ENCODE measurements at regions of chr15 and their contacts with region 1.

Region 1: DNA sequence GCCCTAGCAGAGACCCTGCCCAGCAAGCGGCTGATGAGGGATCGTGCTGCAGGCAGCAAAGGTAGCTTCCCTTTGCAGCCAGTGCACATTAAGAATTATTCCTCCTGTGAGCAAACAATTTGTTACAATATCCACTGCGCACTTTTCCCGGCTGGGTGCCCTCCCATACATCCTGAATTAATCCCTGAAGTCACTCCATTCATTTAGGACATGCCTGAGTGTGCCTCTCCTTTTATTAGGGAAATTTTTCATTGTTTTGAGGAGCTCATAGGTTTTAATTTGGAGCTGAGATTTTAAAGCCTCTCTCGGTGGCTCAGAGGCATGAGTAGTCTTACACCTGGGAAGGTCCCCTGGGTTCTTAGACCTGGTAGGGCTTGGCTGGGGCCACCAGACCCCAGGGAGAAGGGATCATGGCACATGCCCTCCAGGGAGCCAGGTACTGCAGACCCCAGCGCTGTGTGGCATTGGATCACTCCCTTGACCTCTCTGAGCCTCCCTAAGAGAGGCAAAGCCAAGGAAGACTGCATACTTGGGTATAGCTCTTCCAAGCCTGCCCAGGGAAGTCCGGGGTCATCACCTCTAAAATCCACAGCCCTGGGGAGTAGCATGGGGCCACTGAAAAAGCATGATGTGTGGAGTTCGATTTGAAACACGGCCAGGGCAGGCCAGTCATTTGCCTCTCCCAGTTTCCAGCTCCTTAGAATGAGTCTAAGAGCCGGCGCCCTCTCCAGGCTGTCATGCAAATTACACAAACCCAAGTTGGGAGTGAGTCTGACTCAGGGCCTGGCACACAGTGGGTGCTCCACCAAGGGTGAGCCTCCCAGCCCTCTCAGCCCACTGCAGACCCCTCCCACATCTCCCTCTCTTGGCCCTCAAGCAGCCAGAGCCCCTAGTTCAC is 151.9 kb upstream of the LINGO1 start:
- DNase-seq: peak; percentile 79
- ATAC-seq: peak; percentile 79
- H3K4me3 Mint-ChIP-seq: no peak overlapping the region
- H3K27ac Mint-ChIP-seq: no peak overlapping the region
- H3K4me1 Mint-ChIP-seq: peaks cover 20% of the 10 kb centered on the region
- H3K27me3 Mint-ChIP-seq: no peaks in the 10 kb centered on the region
- CTCF ChIP-seq: peak; percentile 58

Region 2: DNA sequence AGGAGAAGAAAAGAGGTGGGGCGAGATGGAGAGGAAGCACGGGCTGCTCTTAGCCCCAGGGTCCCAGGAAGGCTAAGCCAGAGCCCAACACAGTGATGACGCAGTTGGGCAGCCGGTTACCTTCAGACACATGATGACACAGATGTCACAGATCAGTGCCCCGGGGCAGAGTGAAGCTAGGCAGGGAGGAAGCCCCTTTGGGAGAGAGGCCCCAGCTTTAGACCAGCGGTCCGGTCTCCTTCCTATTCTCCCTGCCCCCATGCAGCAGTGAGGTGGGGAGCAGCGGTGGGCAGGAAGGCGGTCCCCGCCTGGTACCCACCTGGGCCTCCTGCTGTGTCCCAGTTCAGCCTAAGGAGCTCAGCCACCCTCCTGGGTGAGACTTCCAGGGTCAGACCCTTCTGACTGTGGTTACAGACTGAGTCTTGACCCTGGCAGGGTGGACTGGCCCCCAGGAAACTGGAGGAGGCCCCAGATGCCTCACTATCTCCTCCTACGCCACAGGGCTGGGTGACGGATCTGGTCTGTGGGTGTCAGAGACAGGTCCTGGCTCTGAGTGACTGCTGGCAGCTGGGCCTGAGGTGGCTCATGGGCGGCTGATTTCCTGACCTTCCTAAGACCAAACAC is 113.2 kb before region 1 on chr15:
- CTCF ChIA-PET with region 1: interaction called, 11 read pairs
- POLR2A ChIA-PET with region 1: interaction called, 3 read pairs
- DNase-seq: no peak
- ATAC-seq: no peak
- H3K4me3 Mint-ChIP-seq: no peak overlapping the region
- H3K27ac Mint-ChIP-seq: no peak overlapping the region
- H3K4me1 Mint-ChIP-seq: no peaks in the 10 kb centered on the region
- H3K27me3 Mint-ChIP-seq: no peaks in the 10 kb centered on the region
- CTCF ChIP-seq: no peak

Region 3: DNA sequence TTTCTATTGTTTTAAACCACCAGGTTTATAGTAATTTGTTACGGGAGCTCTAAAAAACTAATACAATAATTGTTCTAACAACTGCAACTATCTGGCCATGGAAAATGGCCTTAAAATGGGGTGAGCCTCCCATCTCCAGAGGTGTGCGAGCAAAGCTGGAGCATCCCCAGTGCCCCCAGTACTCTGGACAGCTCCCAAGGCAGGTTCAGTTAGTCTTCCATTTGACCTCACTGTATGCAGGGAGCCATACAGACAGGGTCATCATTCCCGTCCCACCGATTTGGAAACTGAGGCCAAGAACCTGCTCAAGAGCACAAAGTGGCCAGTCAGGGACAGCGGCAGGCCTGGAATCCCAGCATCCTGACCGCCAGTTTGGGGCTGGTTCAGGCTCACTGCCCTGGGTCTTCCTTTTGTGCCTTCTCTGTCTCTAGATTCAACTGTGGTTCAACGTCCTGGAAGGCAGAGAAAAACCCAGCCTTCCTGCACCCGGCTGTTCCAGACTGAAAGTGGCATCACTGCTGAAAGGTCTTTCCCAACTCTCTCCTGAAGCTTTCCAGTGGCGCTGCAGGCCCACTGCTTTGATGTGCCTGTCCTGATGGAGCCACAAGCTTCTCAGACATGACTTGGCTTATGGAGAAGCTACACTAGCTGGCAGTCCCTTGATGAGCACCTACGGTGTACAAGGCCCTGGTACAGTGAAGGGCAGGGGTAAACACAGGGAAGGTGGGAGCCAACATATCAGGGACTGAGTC is 75.3 kb before region 1 on chr15:
- CTCF ChIA-PET with region 1: interaction called, 10 read pairs
- POLR2A ChIA-PET with region 1: no interaction called
- DNase-seq: no peak
- ATAC-seq: no peak
- H3K4me3 Mint-ChIP-seq: no peak overlapping the region
- H3K27ac Mint-ChIP-seq: no peak overlapping the region
- H3K4me1 Mint-ChIP-seq: peaks cover 8% of the 10 kb centered on the region
- H3K27me3 Mint-ChIP-seq: no peaks in the 10 kb centered on the region; the same call in 1 of the 2 replicates
- CTCF ChIP-seq: no peak

Region 4: DNA sequence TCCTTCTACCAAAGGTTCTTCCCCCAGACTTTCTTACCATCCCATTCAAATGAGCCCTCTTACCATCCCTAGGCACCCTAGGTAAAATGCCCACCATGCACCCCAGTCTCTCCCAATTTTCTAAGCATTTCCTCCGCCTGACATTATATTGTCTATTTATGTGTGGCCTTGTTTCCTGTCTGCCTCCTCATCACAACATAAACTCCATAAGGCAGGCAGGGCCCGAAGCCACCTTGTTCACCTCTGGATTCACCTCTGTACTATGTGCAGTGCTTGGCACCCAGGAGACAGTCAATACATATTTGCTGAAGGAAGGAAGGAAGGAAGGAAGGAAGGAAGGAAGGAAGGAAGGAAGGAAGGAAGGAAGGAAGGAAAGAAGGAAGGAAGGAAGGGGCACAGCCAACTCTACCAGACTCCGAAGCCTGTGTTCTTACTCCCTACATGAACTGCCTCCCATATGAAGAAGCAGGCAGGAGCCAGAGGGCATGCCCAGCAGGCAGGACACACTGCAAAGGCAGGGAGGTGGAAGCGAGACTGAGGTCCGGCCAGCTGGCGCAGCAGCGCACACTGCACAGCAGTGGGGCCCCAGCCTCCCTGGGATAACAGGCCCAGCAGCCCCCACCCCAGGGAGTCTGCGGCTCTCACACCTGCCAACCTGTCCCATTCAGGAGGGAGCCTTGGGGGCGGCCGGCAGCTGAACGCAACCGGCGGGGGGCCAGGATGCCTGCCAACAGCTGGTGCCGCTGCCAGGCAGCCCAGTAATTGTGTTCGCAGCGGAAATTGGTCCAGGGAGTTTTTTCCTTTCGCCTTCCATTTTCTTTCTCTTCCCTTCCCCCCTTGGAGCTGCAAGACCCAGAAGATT is 46.0 kb before region 1 on chr15:
- CTCF ChIA-PET with region 1: interaction called, 16 read pairs
- POLR2A ChIA-PET with region 1: no interaction called
- DNase-seq: peak; percentile 40
- ATAC-seq: peak; percentile 10
- H3K4me3 Mint-ChIP-seq: peak overlapping the region; percentile 52
- H3K27ac Mint-ChIP-seq: no peak overlapping the region
- H3K4me1 Mint-ChIP-seq: peaks cover 46% of the 10 kb centered on the region
- H3K27me3 Mint-ChIP-seq: no peaks in the 10 kb centered on the region; the same call in 1 of the 2 replicates
- CTCF ChIP-seq: no peak

Region 5: GRCh38 chr15:77768107-77768506 is 16.5 kb before region 1 on chr15:
- CTCF ChIA-PET with region 1: interaction called, 25 read pairs
- POLR2A ChIA-PET with region 1: no interaction called
- DNase-seq: peak; percentile 38
- ATAC-seq: peak; percentile 85
- H3K4me3 Mint-ChIP-seq: no peak overlapping the region
- H3K27ac Mint-ChIP-seq: peak overlapping the region; percentile 39; the same call in 1 of the 2 replicates
- H3K4me1 Mint-ChIP-seq: peaks cover 27% of the 10 kb centered on the region
- H3K27me3 Mint-ChIP-seq: no peaks in the 10 kb centered on the region
- CTCF ChIP-seq: no peak

Region 6: DNA sequence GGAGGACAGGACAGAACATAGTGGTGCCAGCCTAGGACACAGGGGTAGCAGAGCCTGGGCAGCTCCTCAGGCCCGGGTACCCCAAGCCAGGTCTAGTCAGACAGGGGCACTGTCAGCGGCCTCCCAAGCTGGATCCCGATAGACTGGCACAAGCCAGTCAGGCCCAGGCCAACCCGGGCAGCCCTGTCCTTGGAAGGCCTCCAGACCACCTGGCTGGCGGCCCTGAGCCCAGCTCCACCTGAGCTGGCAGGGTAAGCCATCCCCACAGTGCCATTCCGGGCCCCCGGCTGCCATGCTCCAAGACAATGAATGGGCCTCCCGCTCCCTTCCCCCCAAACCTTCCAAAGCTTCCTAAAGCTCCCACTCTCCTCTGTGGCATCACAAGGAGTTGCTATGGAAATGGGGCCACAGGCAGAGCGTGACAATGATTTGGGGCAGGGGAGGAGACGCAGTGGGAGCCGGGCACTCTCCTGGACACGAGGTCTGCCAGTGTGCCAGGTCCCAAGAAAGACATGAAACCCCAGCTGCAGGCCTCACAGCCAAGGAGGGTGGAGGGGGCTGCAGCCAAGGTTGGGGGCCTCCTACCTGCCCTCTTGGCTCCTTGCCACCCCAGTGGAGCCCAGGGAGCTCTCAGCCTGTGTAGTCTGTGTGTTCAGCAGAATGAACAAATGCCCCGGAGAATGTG is 13.6 kb after region 1 on chr15:
- CTCF ChIA-PET with region 1: interaction called, 15 read pairs
- POLR2A ChIA-PET with region 1: no interaction called
- DNase-seq: no peak
- ATAC-seq: no peak
- H3K4me3 Mint-ChIP-seq: no peak overlapping the region
- H3K27ac Mint-ChIP-seq: no peak overlapping the region
- H3K4me1 Mint-ChIP-seq: peaks cover 14% of the 10 kb centered on the region
- H3K27me3 Mint-ChIP-seq: no peaks in the 10 kb centered on the region
- CTCF ChIP-seq: no peak

Region 7: DNA sequence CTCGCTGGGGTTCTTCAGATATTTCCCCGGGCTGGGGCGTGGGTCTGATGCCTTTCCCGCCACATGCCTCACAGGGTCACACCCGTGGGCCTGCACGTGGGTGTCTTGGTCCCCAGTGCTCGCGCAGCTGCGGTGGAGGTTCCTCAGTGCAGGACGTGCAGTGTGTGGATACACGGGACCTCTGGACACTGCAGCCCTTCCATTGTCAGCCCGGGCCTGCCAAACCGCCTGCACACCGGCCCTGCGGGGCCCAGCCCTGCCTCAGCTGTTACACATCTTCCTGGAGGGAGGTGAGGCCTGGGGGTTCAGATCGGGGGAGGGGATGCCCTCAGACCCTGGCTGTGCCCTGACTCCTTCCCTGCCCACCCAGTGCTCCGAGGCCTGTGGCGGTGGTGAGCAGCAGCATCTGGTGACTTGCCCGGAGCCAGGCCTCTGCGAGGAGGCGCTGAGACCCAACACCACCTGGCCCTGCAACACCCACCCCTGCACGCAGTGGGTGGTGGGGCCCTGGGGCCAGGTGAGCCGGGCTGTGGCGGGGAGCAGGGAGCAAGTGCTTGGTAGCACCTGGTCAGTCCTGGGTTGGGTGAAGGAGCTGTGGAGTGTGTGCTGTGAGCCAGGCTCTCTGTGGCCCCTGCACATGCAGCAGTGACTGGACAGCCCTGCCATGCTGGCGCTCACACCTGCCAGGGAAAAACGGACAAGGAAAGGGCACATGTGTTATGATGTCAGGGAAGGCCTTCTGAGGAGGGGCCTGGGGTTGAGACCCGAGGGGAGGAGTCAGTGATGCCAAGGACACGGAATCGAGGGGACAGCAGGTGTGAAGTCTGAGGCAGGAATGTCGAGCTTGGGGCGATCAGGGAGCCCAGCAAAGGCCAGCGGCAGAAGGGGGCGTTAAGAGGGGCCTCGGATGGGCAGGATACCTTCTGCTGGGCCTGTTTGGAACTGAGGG is 204.0 kb after region 1 on chr15:
- CTCF ChIA-PET with region 1: no interaction called
- POLR2A ChIA-PET with region 1: no interaction called
- DNase-seq: no peak
- ATAC-seq: no peak
- H3K4me3 Mint-ChIP-seq: no peak overlapping the region
- H3K27ac Mint-ChIP-seq: peak overlapping the region; percentile 86
- H3K4me1 Mint-ChIP-seq: peaks cover 13% of the 10 kb centered on the region
- H3K27me3 Mint-ChIP-seq: no peaks in the 10 kb centered on the region
- CTCF ChIP-seq: no peak